Aorta (tissue), 5 donors: ENCODE measurements at regions of chr5 and their contacts with region 1.

Region 1: GRCh38 chr5:43484106-43484849 is 613 bp upstream of the TMEM267 start:
- DNase-seq: peak; percentile 88 to 91
- ATAC-seq: peak; percentile 93
- H3K4me3 ChIP-seq: peak overlapping the region; percentile 37 to 82
- H3K27ac ChIP-seq: peak overlapping the region; percentile 89 to 91
- H3K4me1 ChIP-seq: no peaks in the 10 kb centered on the region
- H3K27me3 ChIP-seq: no peaks in the 10 kb centered on the region

Region 2: DNA sequence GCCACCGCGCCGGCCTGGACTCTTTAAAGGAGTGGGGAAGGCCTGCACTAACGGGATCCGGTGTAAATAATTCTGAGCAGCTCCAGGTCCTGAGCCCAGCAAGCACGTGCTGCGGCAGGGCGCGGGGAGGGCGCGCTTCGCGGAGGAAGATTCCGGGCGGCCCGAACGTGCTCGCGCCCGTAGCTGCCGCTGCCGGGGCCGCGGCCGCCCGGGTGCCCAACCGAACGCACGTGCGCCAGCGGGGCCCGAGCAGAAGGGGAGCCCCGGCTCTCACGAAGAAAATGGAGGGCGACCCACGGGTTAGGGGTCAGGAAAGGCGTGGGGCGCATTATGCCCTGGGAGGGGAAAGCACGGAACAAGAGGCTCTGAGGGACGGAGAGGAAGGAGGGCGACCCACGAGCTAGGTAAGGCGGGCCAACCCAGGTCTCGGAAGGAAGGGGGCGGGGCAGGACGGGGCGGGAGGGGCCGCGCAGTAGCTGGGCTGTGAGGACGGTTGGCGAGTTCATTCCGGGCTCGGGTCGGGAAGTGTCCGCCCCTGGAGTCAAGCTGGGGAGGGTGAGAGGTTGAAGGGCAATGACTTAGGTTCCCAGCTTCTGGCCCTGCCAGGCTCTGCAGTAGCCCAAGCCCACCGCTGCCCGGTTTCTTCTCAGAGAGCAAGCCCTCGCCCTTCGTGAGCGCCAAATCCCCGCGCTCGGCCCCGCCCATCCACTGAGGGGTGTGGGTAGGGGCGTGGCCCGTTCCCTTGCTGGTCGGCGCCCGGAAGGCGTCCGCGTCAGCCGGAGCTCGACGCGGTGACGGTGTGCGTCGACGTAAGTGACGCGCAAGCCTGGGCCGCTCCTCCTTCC is 363.3 kb before region 1 on chr5 and contains the start of gene ZNF131:
- intact Hi-C with region 1: loop called in 1 of 2 experiments (anchors 10 kb)
- DNase-seq: peak; percentile 97 to 99
- ATAC-seq: peak; percentile 100
- H3K4me3 ChIP-seq: peak within 1 kb of the TSS; percentile 82 to 83
- H3K27ac ChIP-seq: peak within 1 kb of the TSS; percentile 83 to 92
- H3K4me1 ChIP-seq: no peaks in the 10 kb centered on the region
- H3K27me3 ChIP-seq: no peaks in the 10 kb centered on the region
- total RNA-seq, gene ZNF131: 36.6 to 45.0 TPM

Region 3: GRCh38 chr5:43396762-43397304 is 87.4 kb before region 1 on chr5:
- intact Hi-C with region 1: loop called in 1 of 2 experiments (anchors 5 kb)
- DNase-seq: peak; percentile 60 to 83
- ATAC-seq: peak; percentile 86
- H3K4me3 ChIP-seq: peak overlapping the region in 1 of 2 donors; percentile 5
- H3K27ac ChIP-seq: no peak overlapping the region
- H3K4me1 ChIP-seq: no peaks in the 10 kb centered on the region
- H3K27me3 ChIP-seq: no peaks in the 10 kb centered on the region

Region 4: GRCh38 chr5:43514816-43515677 is 30.8 kb after region 1 on chr5 and contains the start of gene C5orf34:
- intact Hi-C with region 1: loop called in 1 of 2 experiments (anchors 2 kb)
- DNase-seq: peak; percentile 97 to 99
- ATAC-seq: peak; percentile 100
- H3K4me3 ChIP-seq: peak within 1 kb of the TSS; percentile 63 to 92
- H3K27ac ChIP-seq: peak within 1 kb of the TSS; percentile 44 to 92
- H3K4me1 ChIP-seq: peaks cover 0 to 4% of the 10 kb centered on the region in 2 donors
- H3K27me3 ChIP-seq: no peaks in the 10 kb centered on the region
- total RNA-seq, gene C5orf34: 2.0 to 2.3 TPM

Region 5: GRCh38 chr5:43556857-43557542 is 72.7 kb after region 1 on chr5 and contains the start of gene PAIP1:
- intact Hi-C with region 1: loop called in 1 of 2 experiments (anchors 2 kb)
- DNase-seq: peak; percentile 89 to 95
- ATAC-seq: peak; percentile 96
- H3K4me3 ChIP-seq: peak within 1 kb of the TSS; percentile 73 to 100
- H3K27ac ChIP-seq: peak within 1 kb of the TSS; percentile 51 to 99
- H3K4me1 ChIP-seq: peaks cover 0 to 8% of the 10 kb centered on the region in 2 donors
- H3K27me3 ChIP-seq: no peaks in the 10 kb centered on the region
- total RNA-seq, gene PAIP1: 63.5 to 65.8 TPM